Endothelial cell of umbilical vein (primary cell): ENCODE measurements at regions of chr7 and their contacts with region 1.

Region 1: GRCh38 chr7:100852048-100852872 is at the start of gene SLC12A9:
- DNase-seq: peak; percentile 84
- H3K4me3 ChIP-seq: peak within 1 kb of the TSS; percentile 67 to 80 (median 79)
- H3K27ac ChIP-seq: no peak within 1 kb of the TSS
- H3K4me1 ChIP-seq: peaks cover 14% of the 10 kb centered on the region
- H3K27me3 ChIP-seq: no peaks in the 10 kb centered on the region
- CTCF ChIP-seq: peak; percentile 94 to 95
- POLR2A ChIP-seq: peak; percentile 62
- total RNA-seq, gene SLC12A9: 30.1 and 35.0 TPM in 2 replicates

Region 2: DNA sequence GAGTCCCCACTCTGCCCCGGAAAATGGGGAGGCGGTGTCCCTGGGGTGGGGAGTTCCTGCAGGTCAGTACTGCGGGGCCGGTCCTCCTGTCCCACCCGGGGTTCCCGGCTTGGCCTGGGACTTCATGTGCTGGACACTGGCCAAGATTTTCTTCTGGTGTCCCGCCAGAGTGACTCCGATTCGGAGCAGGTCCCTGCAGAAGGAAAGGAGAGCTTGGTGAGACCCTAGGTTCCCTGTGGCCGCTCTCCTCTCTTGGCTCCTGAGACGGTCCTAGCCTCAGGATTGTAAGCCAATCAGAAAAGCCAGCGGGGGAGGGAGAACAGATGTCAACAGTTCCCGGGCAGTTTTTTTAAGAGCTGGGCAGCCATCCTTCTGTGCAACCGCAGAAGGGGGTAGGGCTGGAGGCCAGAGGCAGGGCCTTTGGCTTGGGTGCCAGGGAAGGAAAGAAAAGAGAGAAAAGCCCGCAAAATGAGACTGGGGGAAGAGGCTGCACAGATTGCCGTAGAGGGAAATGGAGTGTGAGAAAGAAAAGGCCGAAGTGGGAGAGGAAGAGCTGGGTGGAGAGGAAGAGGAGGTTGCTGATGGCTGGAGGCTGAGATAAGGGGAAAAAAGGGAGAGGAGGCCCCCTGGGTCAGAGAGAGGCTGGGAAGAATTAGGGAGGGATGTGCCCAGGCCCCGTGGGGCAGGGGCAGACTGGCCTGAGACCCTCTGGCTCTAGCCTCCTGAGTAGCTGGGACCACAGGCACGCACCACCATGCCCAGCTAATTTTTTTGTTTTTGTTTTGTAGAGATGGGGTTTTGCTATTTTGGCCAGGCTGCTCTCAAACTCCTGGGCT is 48.6 kb before region 1 on chr7:
- CTCF ChIA-PET with region 1: interaction called, 214 read pairs
- POLR2A ChIA-PET with region 1: interaction called, 15 read pairs
- dilution Hi-C with region 1: no loop called
- intact Hi-C with region 1: loop called (anchors 1 kb)
- DNase-seq: peak; percentile 65
- H3K4me3 ChIP-seq: no peak overlapping the region
- H3K27ac ChIP-seq: no peak overlapping the region
- H3K4me1 ChIP-seq: peaks cover 44% of the 10 kb centered on the region
- H3K27me3 ChIP-seq: no peaks in the 10 kb centered on the region
- CTCF ChIP-seq: no peak
- POLR2A ChIP-seq: no peak

Region 3: DNA sequence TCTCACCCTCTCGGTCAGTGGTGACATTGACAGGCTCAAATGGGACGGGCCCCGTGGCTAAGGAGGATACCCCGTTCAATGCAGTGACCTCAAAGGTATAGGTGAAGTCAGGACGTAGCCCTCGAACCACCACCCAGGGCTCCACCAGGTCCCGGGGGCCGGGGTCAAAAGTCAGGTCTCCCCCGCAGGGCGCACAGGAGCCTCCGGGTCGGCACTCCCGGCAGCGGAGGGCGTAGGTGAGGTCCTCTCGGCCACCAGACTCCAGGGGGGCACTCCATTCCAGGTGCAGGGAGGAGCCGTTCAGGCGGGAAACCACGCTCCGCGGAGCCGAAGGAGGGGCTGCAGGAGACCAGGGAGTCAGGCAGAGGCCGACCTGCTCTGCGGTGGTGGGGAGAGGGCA is 32.7 kb before region 1 on chr7:
- CTCF ChIA-PET with region 1: interaction called, 60 read pairs
- POLR2A ChIA-PET with region 1: no interaction called
- dilution Hi-C with region 1: no loop called
- intact Hi-C with region 1: no loop called
- DNase-seq: no peak
- H3K4me3 ChIP-seq: no peak overlapping the region
- H3K27ac ChIP-seq: no peak overlapping the region
- H3K4me1 ChIP-seq: peaks cover 11% of the 10 kb centered on the region
- H3K27me3 ChIP-seq: no peaks in the 10 kb centered on the region
- CTCF ChIP-seq: no peak
- POLR2A ChIP-seq: no peak

Region 4: DNA sequence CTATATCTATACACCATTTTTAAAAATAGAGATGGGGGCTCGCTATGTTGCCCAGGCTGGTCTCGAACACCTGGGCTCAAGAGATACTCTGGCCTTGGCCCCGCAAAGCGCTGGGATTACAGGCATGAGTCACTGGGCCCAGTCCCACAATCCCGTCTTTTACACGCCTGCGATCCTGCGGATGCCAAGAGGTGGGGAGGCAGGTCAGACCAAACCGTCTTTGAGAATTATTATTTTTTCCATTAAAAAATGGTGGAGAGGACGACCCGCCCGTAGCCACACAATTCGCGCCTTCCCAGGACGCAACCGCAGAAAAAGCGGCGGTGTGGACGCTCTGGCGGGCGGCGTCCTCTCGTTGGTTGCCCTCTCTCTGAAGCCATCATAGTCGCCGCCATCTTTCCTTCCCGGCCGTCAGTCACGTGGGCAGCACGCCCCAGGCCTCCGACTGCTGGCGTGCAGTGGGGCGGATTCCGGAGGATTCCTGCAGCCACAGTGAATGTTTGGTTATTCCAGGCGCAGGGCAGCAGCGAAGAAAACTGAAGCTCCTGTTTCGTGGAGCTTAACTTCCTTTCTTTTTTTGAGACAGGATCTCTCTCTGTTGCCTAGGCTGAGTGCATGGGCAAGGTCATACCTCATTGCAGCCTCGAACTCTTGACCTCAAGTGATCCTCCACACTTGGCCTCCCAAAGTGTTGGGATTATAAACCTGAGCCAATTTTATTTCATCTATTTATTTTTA is 15.0 kb before region 1 on chr7:
- CTCF ChIA-PET with region 1: interaction called, 37 read pairs
- POLR2A ChIA-PET with region 1: interaction called, 7 read pairs
- dilution Hi-C with region 1: no loop called
- intact Hi-C with region 1: loop called (anchors 1 kb)
- DNase-seq: peak; percentile 92
- H3K4me3 ChIP-seq: peak overlapping the region in 1 of 3 experiments; percentile 10
- H3K27ac ChIP-seq: peak overlapping the region; percentile 82
- H3K4me1 ChIP-seq: peaks cover 16% of the 10 kb centered on the region
- H3K27me3 ChIP-seq: no peaks in the 10 kb centered on the region
- CTCF ChIP-seq: no peak
- POLR2A ChIP-seq: peak; percentile 77

Region 5: GRCh38 chr7:100874577-100875355 is 22.5 kb after region 1 on chr7 and contains the start of gene SRRT:
- CTCF ChIA-PET with region 1: interaction called, 11 read pairs
- POLR2A ChIA-PET with region 1: no interaction called
- dilution Hi-C with region 1: no loop called
- intact Hi-C with region 1: loop called (anchors 2 kb)
- DNase-seq: peak; percentile 97
- H3K4me3 ChIP-seq: peak within 1 kb of the TSS; percentile 72 to 84 (median 79)
- H3K27ac ChIP-seq: peak within 1 kb of the TSS; percentile 89
- H3K4me1 ChIP-seq: peaks cover 19% of the 10 kb centered on the region
- H3K27me3 ChIP-seq: no peaks in the 10 kb centered on the region
- CTCF ChIP-seq: peak in 1 of 2 donors; percentile 31
- POLR2A ChIP-seq: peak; percentile 91
- total RNA-seq, gene SRRT: 199 and 202 TPM in 2 replicates